ENCODE measurements at regions of chr2 and their contacts with region 1.

Region 1: DNA sequence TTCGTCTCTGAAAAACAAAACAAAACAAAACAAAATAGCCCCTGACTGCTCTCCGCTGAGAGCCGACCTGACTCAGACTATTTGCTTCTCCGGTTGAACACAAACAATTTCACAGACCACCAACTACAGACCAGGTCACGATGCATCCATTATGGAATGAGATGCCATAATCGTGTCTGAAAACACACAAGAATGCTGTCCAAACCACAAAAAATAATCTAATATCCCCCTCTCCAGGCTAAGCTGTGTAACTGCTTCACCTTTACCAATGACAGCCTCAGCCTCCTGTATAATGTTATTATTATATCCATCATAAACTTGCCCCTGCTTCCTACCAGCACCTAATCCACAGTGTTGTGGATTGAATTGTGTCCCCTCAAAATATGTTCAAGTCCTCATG is 114.7 kb downstream of the DNAH6 start:
- DNase-seq: peak; percentile 63
- ATAC-seq: peak; percentile 81
- H3K4me3 ChIP-seq: no peak overlapping the region
- H3K27ac ChIP-seq: no peak overlapping the region
- H3K4me1 ChIP-seq: no peaks in the 10 kb centered on the region
- H3K27me3 ChIP-seq: peaks cover 38% of the 10 kb centered on the region
- CTCF ChIP-seq: peak; percentile 78

Region 2: GRCh38 chr2:84022810-84023431 is 608.1 kb before region 1 on chr2:
- CTCF ChIA-PET with region 1: no interaction called
- POLR2A ChIA-PET with region 1: no interaction called
- intact Hi-C with region 1: loop called (anchors 5 kb)
- DNase-seq: peak; percentile 83
- ATAC-seq: no peak
- H3K4me3 ChIP-seq: no peak overlapping the region
- H3K27ac ChIP-seq: no peak overlapping the region
- H3K4me1 ChIP-seq: no peaks in the 10 kb centered on the region
- H3K27me3 ChIP-seq: 0 out of 2 replicates have a peak, but pooled peaks cover 5% of the 10 kb centered on the region
- CTCF ChIP-seq: peak; percentile 81

Region 3: GRCh38 chr2:84613082-84613481 is 18.0 kb before region 1 on chr2:
- CTCF ChIA-PET with region 1: no interaction called
- POLR2A ChIA-PET with region 1: no interaction called
- intact Hi-C with region 1: no loop called
- DNase-seq: peak; percentile 9
- ATAC-seq: no peak
- H3K4me3 ChIP-seq: no peak overlapping the region
- H3K27ac ChIP-seq: no peak overlapping the region
- H3K4me1 ChIP-seq: no peaks in the 10 kb centered on the region
- H3K27me3 ChIP-seq: peaks cover 20% of the 10 kb centered on the region; the same call in 1 of the 2 replicates
- CTCF ChIP-seq: no peak

Region 4: DNA sequence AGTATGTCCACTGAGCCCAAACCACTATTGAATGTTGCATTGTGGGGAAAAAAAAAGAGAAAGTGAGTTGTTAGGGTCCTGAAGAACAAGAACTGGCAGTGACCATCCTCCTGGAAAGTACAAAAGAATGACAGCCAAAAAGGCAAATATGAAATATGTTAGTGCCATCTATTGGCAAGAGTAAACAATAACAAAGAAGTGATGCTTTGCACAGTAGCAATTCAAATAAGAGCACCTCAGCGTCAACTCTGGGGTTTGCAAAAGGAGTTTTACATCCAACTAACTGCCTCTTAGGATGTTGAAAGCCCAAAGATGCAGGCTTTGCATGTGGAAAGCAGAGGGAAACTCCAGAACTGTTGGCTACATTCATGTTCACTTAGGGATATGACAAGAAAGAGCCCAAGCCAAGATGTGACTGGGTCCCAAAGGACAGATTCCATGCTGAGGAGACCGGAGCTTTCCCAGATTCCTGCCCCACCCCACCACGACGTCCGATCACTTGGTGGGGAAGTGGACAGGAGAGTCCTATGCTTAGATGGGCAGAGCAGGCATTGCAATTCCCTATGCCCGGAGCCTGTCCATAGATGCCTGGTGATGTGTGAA is 234.2 kb after region 1 on chr2:
- CTCF ChIA-PET with region 1: no interaction called
- POLR2A ChIA-PET with region 1: no interaction called
- intact Hi-C with region 1: loop called (anchors 2 kb)
- DNase-seq: peak; percentile 61
- ATAC-seq: peak; percentile 79
- H3K4me3 ChIP-seq: no peak overlapping the region
- H3K27ac ChIP-seq: no peak overlapping the region
- H3K4me1 ChIP-seq: no peaks in the 10 kb centered on the region
- H3K27me3 ChIP-seq: no peaks in the 10 kb centered on the region; the same call in 1 of the 2 replicates
- CTCF ChIP-seq: peak; percentile 78